H1 (cell line): ENCODE measurements at regions of chr13 and their contacts with region 1.

Region 1: GRCh38 chr13:24693862-24694471 is 13.8 kb downstream of the ATP12A start:
- DNase-seq: peak in 1 of 2 experiments; percentile 75
- H3K4me3 ChIP-seq: no peak overlapping the region
- H3K27ac ChIP-seq: no peak overlapping the region
- H3K4me1 ChIP-seq: no peaks in the 10 kb centered on the region; a peak in 1 of 7 replicates
- H3K27me3 ChIP-seq: no peaks in the 10 kb centered on the region
- CTCF ChIP-seq: peak; percentile 75 to 93 (median 82)
- EP300 ChIP-seq: no peak
- POLR2A ChIP-seq: no peak
- RAD21 ChIP-seq: peak; percentile 81 to 88

Region 2: DNA sequence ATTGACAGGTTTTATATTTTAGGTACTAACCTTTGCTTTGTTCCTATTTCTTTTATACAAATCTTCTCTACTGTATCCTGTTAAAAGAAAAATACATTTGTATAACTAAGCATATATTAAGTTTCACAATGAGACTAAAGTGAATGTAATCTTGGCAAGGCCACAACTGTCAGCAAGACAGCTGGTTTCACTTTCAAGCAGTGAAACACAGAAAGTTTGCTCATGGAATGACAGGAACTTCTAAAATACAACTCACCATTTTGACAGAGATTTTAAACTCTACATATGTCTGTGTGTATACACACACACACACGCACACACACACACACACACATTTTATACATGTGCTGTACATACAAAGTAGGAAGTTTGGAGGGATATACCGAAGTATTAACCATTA is 234.7 kb before region 1 on chr13:
- CTCF ChIA-PET with region 1: no interaction called
- POLR2A ChIA-PET with region 1: no interaction called
- DNase-seq: no peak
- H3K4me3 ChIP-seq: no peak overlapping the region
- H3K27ac ChIP-seq: no peak overlapping the region
- H3K4me1 ChIP-seq: no peaks in the 10 kb centered on the region
- H3K27me3 ChIP-seq: no peaks in the 10 kb centered on the region
- CTCF ChIP-seq: no peak
- EP300 ChIP-seq: no peak
- POLR2A ChIP-seq: no peak
- RAD21 ChIP-seq: no peak

Region 3: GRCh38 chr13:24671386-24672107 is 22.4 kb before region 1 on chr13:
- CTCF ChIA-PET with region 1: interaction called, 12 read pairs
- POLR2A ChIA-PET with region 1: no interaction called
- DNase-seq: no peak
- H3K4me3 ChIP-seq: peak overlapping the region in 1 of 4 experiments; percentile 41; a peak in 3 of 8 replicates
- H3K27ac ChIP-seq: no peak overlapping the region
- H3K4me1 ChIP-seq: peaks cover 0 to 4% (median under 1%) of the 10 kb centered on the region in 4 experiments; a peak in 2 of 7 replicates
- H3K27me3 ChIP-seq: no peaks in the 10 kb centered on the region
- CTCF ChIP-seq: peak; percentile 17 to 79 (median 75)
- EP300 ChIP-seq: no peak
- POLR2A ChIP-seq: no peak
- RAD21 ChIP-seq: peak; percentile 57 to 67

Region 4: DNA sequence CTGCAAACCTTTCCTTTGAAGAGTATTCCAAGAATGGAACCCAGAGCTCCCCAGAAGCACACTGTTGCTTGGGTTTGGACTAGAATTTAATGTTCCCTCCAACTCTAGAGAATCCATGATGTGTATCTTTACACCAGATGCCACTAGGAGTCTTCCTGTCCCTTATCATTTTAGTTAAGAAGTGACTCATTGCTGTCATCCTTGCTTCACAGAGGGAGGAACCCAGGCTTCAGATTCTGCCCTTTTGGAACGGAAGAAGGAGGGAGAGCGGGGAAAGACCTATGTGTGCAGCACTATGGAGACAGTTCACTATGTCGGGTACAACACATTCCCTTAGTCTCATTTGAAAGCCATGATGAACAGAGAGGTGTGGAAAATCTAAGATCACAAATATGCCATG is 15.8 kb before region 1 on chr13:
- CTCF ChIA-PET with region 1: interaction called, 39 read pairs
- POLR2A ChIA-PET with region 1: no interaction called
- DNase-seq: no peak
- H3K4me3 ChIP-seq: no peak overlapping the region
- H3K27ac ChIP-seq: no peak overlapping the region
- H3K4me1 ChIP-seq: peaks cover 0 to 4% (median 1%) of the 10 kb centered on the region in 4 experiments; a peak in 3 of 7 replicates
- H3K27me3 ChIP-seq: peaks cover 3 to 22% (median 18%) of the 10 kb centered on the region in 4 experiments
- CTCF ChIP-seq: no peak
- EP300 ChIP-seq: no peak
- POLR2A ChIP-seq: no peak
- RAD21 ChIP-seq: no peak

Region 5: GRCh38 chr13:24709186-24709913 is 15.4 kb after region 1 on chr13:
- CTCF ChIA-PET with region 1: interaction called, 66 read pairs
- POLR2A ChIA-PET with region 1: no interaction called
- DNase-seq: no peak
- H3K4me3 ChIP-seq: no peak overlapping the region
- H3K27ac ChIP-seq: no peak overlapping the region
- H3K4me1 ChIP-seq: no peaks in the 10 kb centered on the region
- H3K27me3 ChIP-seq: no peaks in the 10 kb centered on the region
- CTCF ChIP-seq: no peak
- EP300 ChIP-seq: no peak
- POLR2A ChIP-seq: no peak
- RAD21 ChIP-seq: 0 out of 4 replicates have a peak, but pooled peaks of 1 of the 2 experiments have one; percentile 1

Region 6: GRCh38 chr13:24822640-24823039 is 128.7 kb after region 1 on chr13:
- CTCF ChIA-PET with region 1: no interaction called
- POLR2A ChIA-PET with region 1: no interaction called
- DNase-seq: no peak
- H3K4me3 ChIP-seq: no peak overlapping the region
- H3K27ac ChIP-seq: no peak overlapping the region
- H3K4me1 ChIP-seq: no peaks in the 10 kb centered on the region
- H3K27me3 ChIP-seq: no peaks in the 10 kb centered on the region
- CTCF ChIP-seq: no peak
- EP300 ChIP-seq: no peak
- POLR2A ChIP-seq: no peak
- RAD21 ChIP-seq: no peak